ENCODE measurements at regions of chr2 and their contacts with region 1.

Region 1: GRCh38 chr2:71510196-71510807 is 56.9 kb downstream of the DYSF start:
- DNase-seq: no peak
- H3K4me3 ChIP-seq: no peak overlapping the region
- H3K27me3 ChIP-seq: peaks cover 5% of the 10 kb centered on the region
- CTCF ChIP-seq: peak; percentile 93

Region 2: DNA sequence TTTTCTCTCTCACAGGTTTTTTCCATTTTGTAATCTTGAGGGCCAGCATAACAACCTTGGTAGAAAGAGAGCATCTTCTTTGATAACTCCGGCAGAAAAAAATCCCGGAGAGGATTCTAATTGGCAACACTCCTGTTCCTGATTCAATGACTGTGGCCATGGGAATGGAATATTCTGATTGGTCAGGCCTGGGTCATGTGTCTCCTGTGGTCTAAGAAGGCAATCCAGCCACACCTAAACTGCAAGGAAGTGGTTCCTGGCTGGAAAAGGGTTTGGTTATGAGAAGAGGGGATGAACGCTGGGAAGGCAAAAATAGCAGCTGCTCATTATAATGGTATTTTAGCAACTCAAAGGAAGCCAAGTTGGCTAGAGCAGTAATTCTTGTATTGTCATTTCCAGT is 203.5 kb before region 1 on chr2:
- CTCF ChIA-PET with region 1: interaction called, 191 read pairs
- POLR2A ChIA-PET with region 1: no interaction called
- DNase-seq: no peak
- H3K4me3 ChIP-seq: no peak overlapping the region
- H3K27me3 ChIP-seq: no peaks in the 10 kb centered on the region; the same call in 1 of the 2 replicates
- CTCF ChIP-seq: no peak

Region 3: DNA sequence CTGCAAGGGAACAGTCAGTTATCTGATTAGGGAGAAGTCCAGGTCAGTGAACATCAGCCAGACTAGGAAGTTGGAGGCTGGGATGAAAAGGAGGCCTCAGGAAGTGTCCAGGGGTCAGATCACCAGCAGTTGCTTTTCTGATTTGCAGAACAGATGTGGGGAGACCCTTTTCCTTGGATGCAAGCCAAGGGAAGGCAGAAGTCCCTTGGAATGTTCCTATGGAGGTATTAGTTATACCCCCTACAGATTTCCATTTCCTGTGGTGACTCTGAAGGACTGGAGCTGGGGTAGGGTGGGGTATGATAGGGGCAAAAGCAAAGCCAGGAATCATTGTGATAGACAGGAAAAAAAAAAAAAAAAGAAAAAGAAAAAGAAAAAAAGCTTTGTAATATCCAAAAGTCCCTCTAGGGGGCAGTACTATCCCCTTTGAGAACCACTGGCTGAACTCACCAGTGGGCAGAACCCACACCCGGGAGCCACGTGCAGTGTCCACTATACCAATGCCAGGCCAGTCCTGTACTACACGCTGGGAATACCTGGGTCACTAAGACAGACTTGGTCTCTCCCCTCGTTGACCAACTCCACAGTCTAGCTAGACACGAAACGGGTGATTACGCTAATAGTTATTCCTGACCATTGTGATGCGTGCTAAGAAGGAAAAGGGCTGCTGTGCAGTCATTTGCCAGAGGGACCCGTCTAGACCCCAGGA is 49.6 kb before region 1 on chr2:
- CTCF ChIA-PET with region 1: interaction called, 139 read pairs
- POLR2A ChIA-PET with region 1: interaction called, 4 read pairs
- DNase-seq: no peak
- H3K4me3 ChIP-seq: no peak overlapping the region
- H3K27me3 ChIP-seq: peaks cover 20% of the 10 kb centered on the region
- CTCF ChIP-seq: peak; percentile 72

Region 4: GRCh38 chr2:71524476-71524875 is 14.2 kb after region 1 on chr2:
- CTCF ChIA-PET with region 1: interaction called, 14 read pairs
- POLR2A ChIA-PET with region 1: no interaction called
- DNase-seq: no peak
- H3K4me3 ChIP-seq: no peak overlapping the region
- H3K27me3 ChIP-seq: peaks cover 12% of the 10 kb centered on the region
- CTCF ChIP-seq: no peak

Region 5: GRCh38 chr2:71530641-71531332 is 20.5 kb after region 1 on chr2:
- CTCF ChIA-PET with region 1: interaction called, 14 read pairs
- POLR2A ChIA-PET with region 1: interaction called, 4 read pairs
- DNase-seq: no peak
- H3K4me3 ChIP-seq: no peak overlapping the region
- H3K27me3 ChIP-seq: peaks cover 11% of the 10 kb centered on the region
- CTCF ChIP-seq: peak; percentile 67

Region 6: DNA sequence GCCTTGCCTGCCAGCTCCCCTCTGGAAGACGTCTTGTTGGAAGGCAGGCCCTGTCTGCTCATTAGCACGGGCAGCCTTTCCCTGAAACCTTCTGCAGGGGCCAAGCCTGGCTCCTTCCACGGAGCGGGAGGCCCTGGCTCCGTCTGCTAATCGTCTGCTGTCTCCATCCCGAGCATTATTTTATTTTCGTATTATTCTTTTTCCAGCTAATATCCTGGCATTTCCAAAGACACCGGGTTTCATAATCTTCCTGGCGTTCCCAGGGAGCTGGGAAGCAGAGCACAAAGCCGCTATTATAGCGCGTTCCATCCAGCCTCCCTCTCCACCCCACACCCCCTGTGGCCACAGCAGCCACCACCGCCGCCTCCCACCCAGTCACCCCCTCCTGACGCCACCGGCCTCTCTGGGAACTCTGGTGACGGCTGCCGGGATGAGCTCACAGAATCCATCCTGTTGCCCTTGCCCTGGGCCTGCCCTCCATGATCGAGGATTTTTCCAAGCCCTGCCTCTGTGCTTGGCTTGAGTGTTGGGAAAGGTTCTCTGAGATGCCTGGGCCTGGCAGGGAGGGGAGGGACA is 68.6 kb after region 1 on chr2:
- CTCF ChIA-PET with region 1: no interaction called
- POLR2A ChIA-PET with region 1: no interaction called
- DNase-seq: no peak
- H3K4me3 ChIP-seq: no peak overlapping the region
- H3K27me3 ChIP-seq: peaks cover 10% of the 10 kb centered on the region
- CTCF ChIP-seq: no peak

Region 7: GRCh38 chr2:71716781-71717624 is 206.7 kb after region 1 on chr2:
- CTCF ChIA-PET with region 1: no interaction called
- POLR2A ChIA-PET with region 1: no interaction called
- DNase-seq: peak; percentile 85
- H3K4me3 ChIP-seq: no peak overlapping the region
- H3K27me3 ChIP-seq: no peaks in the 10 kb centered on the region; the same call in none of the 2 replicates
- CTCF ChIP-seq: no peak

Region 8: GRCh38 chr2:71962911-71963694 is 452.8 kb after region 1 on chr2:
- CTCF ChIA-PET with region 1: no interaction called
- POLR2A ChIA-PET with region 1: no interaction called
- DNase-seq: no peak
- H3K4me3 ChIP-seq: no peak overlapping the region
- H3K27me3 ChIP-seq: peaks cover 6% of the 10 kb centered on the region
- CTCF ChIP-seq: no peak